H1 (cell line): ENCODE measurements at regions of chr17 and their contacts with region 1.

Region 1: GRCh38 chr17:41648411-41649195 is 24.2 kb upstream of the KRT17 start:
- DNase-seq: peak; percentile 74 to 96
- H3K4me3 ChIP-seq: peak overlapping the region; percentile 26 to 61 (median 44); a peak in 7 of 8 replicates
- H3K27ac ChIP-seq: no peak overlapping the region
- H3K4me1 ChIP-seq: peaks cover 0 to 6% (median 2%) of the 10 kb centered on the region in 4 experiments; a peak in 4 of 7 replicates
- H3K27me3 ChIP-seq: no peaks in the 10 kb centered on the region; a peak in 2 of 7 replicates
- CTCF ChIP-seq: peak; percentile 91 to 97 (median 96)
- EP300 ChIP-seq: no peak
- POLR2A ChIP-seq: no peak
- RAD21 ChIP-seq: peak; percentile 64 to 74

Region 2: GRCh38 chr17:40854159-40854814 is 794.3 kb before region 1 on chr17:
- CTCF ChIA-PET with region 1: interaction called, 10 read pairs
- POLR2A ChIA-PET with region 1: no interaction called
- DNase-seq: no peak
- H3K4me3 ChIP-seq: no peak overlapping the region
- H3K27ac ChIP-seq: no peak overlapping the region
- H3K4me1 ChIP-seq: peaks cover 0 to 8% (median 2%) of the 10 kb centered on the region in 4 experiments; a peak in 3 of 7 replicates
- H3K27me3 ChIP-seq: no peaks in the 10 kb centered on the region; a peak in 1 of 7 replicates
- CTCF ChIP-seq: no peak
- EP300 ChIP-seq: no peak
- POLR2A ChIP-seq: no peak
- RAD21 ChIP-seq: no peak

Region 3: DNA sequence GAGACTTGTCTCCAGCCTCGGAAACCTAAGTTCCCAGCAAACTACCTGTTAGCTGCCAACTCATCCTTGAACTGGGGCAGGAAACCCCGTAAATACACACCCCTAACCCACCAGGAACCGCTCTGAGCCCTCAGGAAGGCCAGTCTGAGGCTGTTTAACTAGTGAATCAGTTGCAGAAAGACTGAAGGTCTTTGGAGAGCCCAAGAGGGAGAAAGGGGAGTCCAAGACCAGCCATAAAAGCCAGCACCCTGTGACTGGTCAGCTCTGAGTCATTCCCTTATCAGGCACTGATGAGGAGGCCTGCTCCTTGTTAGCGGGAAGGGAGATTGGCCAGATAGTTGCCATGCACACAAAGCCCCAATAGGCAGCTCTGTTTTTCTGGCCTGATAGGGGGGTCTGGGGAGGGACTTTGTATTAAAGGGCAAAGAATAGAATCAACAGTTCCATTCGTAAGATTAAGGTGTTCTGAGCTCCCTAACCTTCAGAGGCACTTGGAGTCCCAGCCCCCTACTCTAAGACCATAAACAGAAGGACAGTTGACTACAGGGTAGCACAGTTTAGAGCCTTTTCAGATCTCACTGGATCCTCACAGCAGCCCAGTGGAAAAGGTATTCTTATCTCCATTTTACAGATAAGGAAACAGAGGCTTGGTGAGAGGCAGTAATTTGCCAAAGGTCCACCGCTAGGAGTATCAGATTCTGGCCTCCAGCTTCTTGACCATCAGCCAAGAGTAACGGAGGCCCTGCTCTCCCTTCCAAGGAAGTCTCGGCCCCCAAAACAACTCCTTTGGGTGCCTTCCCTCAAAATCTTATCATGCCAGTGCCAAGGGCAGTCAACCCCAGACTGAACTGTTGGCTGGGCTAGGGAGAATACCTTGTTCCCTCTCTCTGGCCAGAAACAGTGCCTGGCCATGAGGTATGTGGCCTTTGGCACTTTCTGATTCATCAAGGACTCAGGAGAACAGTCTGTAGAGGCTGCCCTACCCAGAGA is 118.2 kb before region 1 on chr17:
- CTCF ChIA-PET with region 1: interaction called, 9 read pairs
- POLR2A ChIA-PET with region 1: interaction called, 14 read pairs
- DNase-seq: no peak
- H3K4me3 ChIP-seq: no peak overlapping the region
- H3K27ac ChIP-seq: no peak overlapping the region
- H3K4me1 ChIP-seq: peaks cover 2 to 19% (median 10%) of the 10 kb centered on the region in 4 experiments
- H3K27me3 ChIP-seq: no peaks in the 10 kb centered on the region
- CTCF ChIP-seq: no peak
- EP300 ChIP-seq: no peak
- POLR2A ChIP-seq: no peak
- RAD21 ChIP-seq: no peak

Region 4: GRCh38 chr17:41588126-41588810 is 60.3 kb before region 1 on chr17:
- CTCF ChIA-PET with region 1: interaction called, 35 read pairs
- POLR2A ChIA-PET with region 1: no interaction called
- DNase-seq: no peak
- H3K4me3 ChIP-seq: no peak overlapping the region
- H3K27ac ChIP-seq: no peak overlapping the region
- H3K4me1 ChIP-seq: no peaks in the 10 kb centered on the region; a peak in 1 of 7 replicates
- H3K27me3 ChIP-seq: no peaks in the 10 kb centered on the region
- CTCF ChIP-seq: no peak
- EP300 ChIP-seq: no peak
- POLR2A ChIP-seq: no peak
- RAD21 ChIP-seq: no peak

Region 5: DNA sequence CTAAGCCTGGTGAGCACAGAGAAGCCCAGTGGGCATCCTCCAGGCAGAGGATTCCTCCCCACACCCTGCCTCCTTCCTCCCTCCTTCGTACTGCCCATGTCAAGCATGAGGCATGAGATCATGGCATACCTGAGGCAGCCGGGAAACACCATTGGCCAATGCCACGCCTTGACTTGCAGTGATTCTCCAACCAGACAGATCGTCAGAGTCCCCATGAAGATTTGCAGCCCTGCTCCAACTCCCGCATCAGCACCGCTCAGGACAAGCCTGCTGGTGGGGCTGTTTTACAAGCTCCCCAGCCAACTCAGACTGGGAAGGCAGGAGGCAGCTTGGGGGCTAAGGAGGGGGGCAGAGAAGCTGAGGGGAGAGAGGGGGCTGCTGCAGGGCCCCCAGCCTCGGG is 33.1 kb before region 1 on chr17:
- CTCF ChIA-PET with region 1: interaction called, 103 read pairs
- POLR2A ChIA-PET with region 1: no interaction called
- DNase-seq: peak in 1 of 2 experiments; percentile 31
- H3K4me3 ChIP-seq: no peak overlapping the region
- H3K27ac ChIP-seq: no peak overlapping the region
- H3K4me1 ChIP-seq: peaks cover 0 to 4% (median 2%) of the 10 kb centered on the region in 4 experiments; a peak in 4 of 7 replicates
- H3K27me3 ChIP-seq: no peaks in the 10 kb centered on the region
- CTCF ChIP-seq: peak in 1 of 3 experiments; percentile 14; a peak in 2 of 4 replicates
- EP300 ChIP-seq: no peak
- POLR2A ChIP-seq: no peak
- RAD21 ChIP-seq: peak; percentile 13 to 29; a peak in 3 of 4 replicates

Region 6: GRCh38 chr17:41658846-41659245 is 10.2 kb after region 1 on chr17:
- CTCF ChIA-PET with region 1: interaction called, 338 read pairs
- POLR2A ChIA-PET with region 1: interaction called, 4 read pairs
- DNase-seq: no peak
- H3K4me3 ChIP-seq: no peak overlapping the region
- H3K27ac ChIP-seq: no peak overlapping the region
- H3K4me1 ChIP-seq: peaks cover 0 to 22% (median 8%) of the 10 kb centered on the region in 4 experiments; a peak in 5 of 7 replicates
- H3K27me3 ChIP-seq: no peaks in the 10 kb centered on the region; a peak in 1 of 7 replicates
- CTCF ChIP-seq: no peak
- EP300 ChIP-seq: no peak
- POLR2A ChIP-seq: no peak
- RAD21 ChIP-seq: no peak

Region 7: DNA sequence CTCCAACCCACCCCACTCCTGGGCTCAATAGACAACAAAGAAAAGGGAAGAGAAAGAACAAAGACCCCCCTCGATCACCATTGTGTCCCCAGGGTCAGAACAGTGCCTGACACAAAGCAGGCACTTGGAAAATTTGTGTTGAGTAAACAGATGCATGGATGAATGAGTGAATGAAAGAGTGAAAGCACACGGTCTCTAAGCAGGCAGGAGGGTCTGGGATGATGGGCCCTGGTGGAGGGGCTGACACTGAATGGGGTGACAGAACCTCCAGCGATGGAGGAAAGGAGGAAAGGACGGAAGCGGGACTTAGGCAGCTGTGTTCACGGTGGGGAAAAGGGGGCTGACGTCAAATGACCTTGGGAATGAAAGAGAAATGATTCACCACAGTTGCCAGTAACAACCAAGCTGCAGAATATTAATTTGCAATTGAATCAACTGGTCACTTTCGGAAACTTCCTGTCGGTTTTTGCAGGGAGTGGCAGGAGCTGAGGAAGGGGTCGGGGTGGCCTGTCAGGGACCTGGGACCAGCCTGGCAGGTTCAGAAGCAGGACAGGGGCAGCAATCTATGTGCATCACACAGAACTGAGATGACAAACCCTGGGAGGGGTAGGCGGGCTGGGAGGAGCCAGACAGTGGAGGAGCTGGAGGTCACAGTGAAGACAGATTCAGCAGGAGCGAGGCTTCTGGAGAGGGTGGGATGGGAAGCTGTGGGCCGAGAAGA is 56.8 kb after region 1 on chr17:
- CTCF ChIA-PET with region 1: no interaction called
- POLR2A ChIA-PET with region 1: no interaction called
- DNase-seq: peak; percentile 57 to 58
- H3K4me3 ChIP-seq: peak overlapping the region in 1 of 4 experiments; percentile 2; a peak in 2 of 8 replicates
- H3K27ac ChIP-seq: no peak overlapping the region
- H3K4me1 ChIP-seq: peaks cover 6 to 18% (median 10%) of the 10 kb centered on the region in 4 experiments
- H3K27me3 ChIP-seq: peaks cover 8 to 61% (median 52%) of the 10 kb centered on the region in 4 experiments
- CTCF ChIP-seq: no peak
- EP300 ChIP-seq: no peak
- POLR2A ChIP-seq: no peak
- RAD21 ChIP-seq: no peak